ENCODE measurements at regions of chr12 and their contacts with region 1.

Region 1: DNA sequence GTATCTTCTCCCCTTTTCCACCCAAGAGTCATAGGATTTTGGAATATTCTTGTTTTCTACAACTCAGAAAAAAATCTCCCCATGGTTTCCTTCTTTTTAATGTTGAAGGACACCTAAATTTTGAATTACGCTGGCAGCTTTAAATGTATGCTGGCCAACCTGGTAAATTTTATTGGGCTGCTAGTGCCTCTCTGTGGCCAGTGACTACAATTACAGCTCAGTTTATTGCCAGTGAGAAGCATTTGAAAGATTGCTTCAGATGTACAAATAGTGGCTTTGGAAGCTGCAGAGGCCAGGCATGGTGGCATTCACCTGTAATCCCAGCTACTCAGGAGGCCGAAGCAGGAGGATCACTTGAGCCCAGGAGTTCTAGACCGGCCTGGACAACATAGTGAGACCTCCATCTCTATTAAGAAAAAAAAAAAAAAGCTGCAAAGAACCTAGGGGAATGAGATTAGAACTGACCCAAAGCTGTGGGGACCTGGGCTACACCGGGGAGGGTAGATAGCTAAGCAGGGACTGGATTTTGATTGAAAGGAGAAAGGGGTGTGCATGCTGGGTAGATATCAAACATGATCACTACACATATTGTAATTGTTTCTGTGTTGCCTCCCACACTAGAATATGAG is 7.6 kb upstream of the RAB21 start:
- DNase-seq: peak; percentile 49
- ATAC-seq: peak; percentile 90
- H3K4me3 ChIP-seq: no peak overlapping the region
- H3K27ac ChIP-seq: no peak overlapping the region
- H3K4me1 ChIP-seq: no peaks in the 10 kb centered on the region
- H3K27me3 ChIP-seq: peaks cover 7% of the 10 kb centered on the region; the same call in 1 of the 2 replicates
- CTCF ChIP-seq: peak; percentile 59 to 81 (median 76)
- POLR2A ChIP-seq: no peak
- RAD21 ChIP-seq: peak; percentile 93

Region 2: GRCh38 chr12:70733385-70733784 is 1013.7 kb before region 1 on chr12:
- CTCF ChIA-PET with region 1: interaction called, 7 read pairs
- POLR2A ChIA-PET with region 1: no interaction called
- RAD21 ChIA-PET with region 1: no interaction called
- intact Hi-C with region 1: loop called (anchors 5 kb)
- DNase-seq: peak; percentile 76
- ATAC-seq: peak; percentile 86
- H3K4me3 ChIP-seq: no peak overlapping the region
- H3K27ac ChIP-seq: no peak overlapping the region
- H3K4me1 ChIP-seq: no peaks in the 10 kb centered on the region
- H3K27me3 ChIP-seq: no peaks in the 10 kb centered on the region
- CTCF ChIP-seq: peak; percentile 66 to 89 (median 70)
- POLR2A ChIP-seq: no peak
- RAD21 ChIP-seq: peak; percentile 92

Region 3: DNA sequence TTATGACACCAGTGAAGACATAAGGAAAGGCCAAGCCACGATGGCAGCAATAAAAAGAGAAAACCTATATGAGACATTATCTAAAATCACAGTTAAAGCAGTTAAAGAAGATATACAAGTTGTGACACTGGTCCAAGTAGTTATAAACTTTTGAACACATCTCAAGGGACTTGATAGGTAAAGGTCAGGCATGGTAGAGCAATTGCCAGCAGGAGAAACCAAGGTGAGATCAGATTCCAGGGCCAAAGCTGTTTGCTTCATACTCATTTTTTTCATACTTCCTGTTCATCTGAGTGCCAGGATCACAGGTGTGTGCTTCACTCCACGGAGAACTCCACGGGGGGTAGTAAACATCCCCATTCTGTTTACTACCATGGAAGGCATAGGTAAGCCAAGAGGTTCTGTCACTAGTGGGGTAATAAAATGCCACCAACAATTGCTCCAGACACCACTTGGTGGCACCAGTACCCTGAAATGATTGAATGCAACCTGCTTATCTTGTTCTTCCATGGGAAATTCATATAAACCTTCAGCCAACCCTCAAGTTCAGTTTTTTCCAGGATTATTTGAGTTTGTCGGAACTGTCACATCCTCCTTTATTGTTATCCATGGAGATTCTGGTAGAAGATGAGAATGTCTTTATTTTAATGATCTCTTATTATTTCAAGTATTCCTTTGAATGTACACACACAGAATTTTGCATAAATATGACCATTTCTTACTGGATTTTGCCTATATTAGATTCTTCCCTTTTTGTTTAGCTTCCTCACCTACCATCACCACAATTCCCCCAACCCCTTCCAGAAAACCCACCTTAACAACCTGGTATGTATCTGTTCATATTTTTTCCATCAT is 530.1 kb before region 1 on chr12:
- CTCF ChIA-PET with region 1: interaction called, 8 read pairs
- POLR2A ChIA-PET with region 1: no interaction called
- RAD21 ChIA-PET with region 1: no interaction called
- intact Hi-C with region 1: loop called (anchors 1 kb)
- DNase-seq: peak; percentile 55
- ATAC-seq: peak; percentile 84
- H3K4me3 ChIP-seq: no peak overlapping the region
- H3K27ac ChIP-seq: no peak overlapping the region
- H3K4me1 ChIP-seq: no peaks in the 10 kb centered on the region
- H3K27me3 ChIP-seq: no peaks in the 10 kb centered on the region
- CTCF ChIP-seq: peak; percentile 59 to 70 (median 70); a peak in 5 of 6 replicates
- POLR2A ChIP-seq: no peak
- RAD21 ChIP-seq: peak; percentile 81

Region 4: DNA sequence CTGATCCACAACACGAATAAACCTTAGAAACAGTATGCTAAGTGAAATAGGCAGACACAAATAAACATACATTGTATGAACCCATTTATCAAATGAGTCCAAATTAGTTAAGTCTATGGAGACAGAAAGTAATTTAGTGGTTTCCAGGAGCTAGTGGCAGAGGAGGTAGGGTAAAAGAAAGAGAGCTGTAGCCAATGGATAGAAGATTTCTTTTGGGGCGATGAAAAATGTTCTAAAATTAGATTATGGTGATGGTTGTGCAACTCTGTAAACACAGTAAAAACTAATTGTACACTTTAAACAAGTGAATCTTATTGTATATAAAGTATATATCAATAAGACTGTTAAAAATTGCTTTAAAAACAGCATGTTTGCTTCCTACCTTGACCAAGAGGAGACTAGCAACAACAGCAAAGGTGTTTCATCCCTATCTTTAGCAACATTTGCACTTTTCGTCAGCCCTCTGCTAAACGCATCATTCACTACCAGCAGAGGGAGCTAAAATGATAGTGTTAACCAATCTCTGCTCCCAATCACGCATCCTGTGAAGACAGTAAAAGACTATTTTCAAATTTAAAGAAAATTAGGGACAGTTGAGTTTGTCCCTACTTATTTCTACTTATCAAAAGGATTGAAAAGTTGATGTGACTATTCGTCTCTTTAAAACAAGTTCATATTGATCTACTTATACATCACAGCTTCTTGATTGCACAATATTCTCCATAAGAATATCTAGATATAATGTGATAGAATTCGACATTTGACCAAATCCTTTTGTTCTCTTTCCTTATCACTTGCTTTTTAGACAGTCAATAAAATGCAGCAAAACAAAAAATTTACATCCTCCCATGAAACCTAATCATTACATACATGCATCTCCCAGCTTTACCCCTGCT is 331.5 kb before region 1 on chr12:
- CTCF ChIA-PET with region 1: interaction called, 33 read pairs
- POLR2A ChIA-PET with region 1: no interaction called
- RAD21 ChIA-PET with region 1: interaction called, 3 read pairs
- intact Hi-C with region 1: loop called (anchors 1 kb)
- DNase-seq: peak; percentile 42
- ATAC-seq: peak; percentile 90
- H3K4me3 ChIP-seq: no peak overlapping the region
- H3K27ac ChIP-seq: no peak overlapping the region
- H3K4me1 ChIP-seq: no peaks in the 10 kb centered on the region
- H3K27me3 ChIP-seq: no peaks in the 10 kb centered on the region
- CTCF ChIP-seq: peak; percentile 79 to 86 (median 81)
- POLR2A ChIP-seq: no peak
- RAD21 ChIP-seq: peak; percentile 87

Region 5: DNA sequence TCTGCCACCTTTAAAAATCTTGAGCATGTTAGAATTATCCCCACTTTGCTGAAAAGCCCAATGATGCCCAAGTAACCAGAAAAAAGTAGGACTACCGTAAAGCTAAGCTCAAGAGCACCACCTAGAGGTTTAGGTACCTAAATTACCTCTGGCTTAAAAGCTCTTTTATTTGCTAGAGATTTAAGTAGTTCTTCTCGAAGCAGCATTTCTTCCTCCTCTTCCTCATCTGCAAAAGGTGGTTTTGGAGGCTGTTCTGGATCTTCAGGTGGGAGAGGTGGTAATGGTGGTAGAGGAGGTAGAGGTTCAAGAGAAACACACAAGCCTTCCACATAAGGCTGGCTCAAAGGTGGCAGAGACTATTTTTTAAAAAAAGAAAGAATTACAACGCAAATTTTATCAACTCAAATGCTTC is 110.4 kb before region 1 on chr12:
- CTCF ChIA-PET with region 1: interaction called, 39 read pairs
- POLR2A ChIA-PET with region 1: interaction called, 3 read pairs
- RAD21 ChIA-PET with region 1: interaction called in 1 of 2 experiments, 6 read pairs
- intact Hi-C with region 1: loop called (anchors 2 kb)
- DNase-seq: peak; percentile 57
- ATAC-seq: peak; percentile 69
- H3K4me3 ChIP-seq: no peak overlapping the region
- H3K27ac ChIP-seq: no peak overlapping the region
- H3K4me1 ChIP-seq: peaks cover 0 to 4% of the 10 kb centered on the region in 2 experiments; a peak in 1 of 4 replicates
- H3K27me3 ChIP-seq: no peaks in the 10 kb centered on the region
- CTCF ChIP-seq: peak; percentile 42 to 79 (median 78); a peak in 5 of 6 replicates
- POLR2A ChIP-seq: no peak
- RAD21 ChIP-seq: peak; percentile 62

Region 6: GRCh38 chr12:71685914-71686665 is 61.0 kb before region 1 on chr12 and contains the start of gene TMEM19:
- CTCF ChIA-PET with region 1: interaction called, 19 read pairs
- POLR2A ChIA-PET with region 1: interaction called, 5 read pairs
- RAD21 ChIA-PET with region 1: interaction called in 1 of 2 experiments, 3 read pairs
- intact Hi-C with region 1: no loop called
- DNase-seq: peak; percentile 81
- ATAC-seq: peak; percentile 97
- H3K4me3 ChIP-seq: peak within 1 kb of the TSS; percentile 61 to 69
- H3K27ac ChIP-seq: peak within 1 kb of the TSS; percentile 84
- H3K4me1 ChIP-seq: peaks cover 0 to 19% of the 10 kb centered on the region in 2 experiments; a peak in 2 of 4 replicates
- H3K27me3 ChIP-seq: no peaks in the 10 kb centered on the region
- CTCF ChIP-seq: peak in 2 of 3 experiments; percentile 35 to 41; a peak in 4 of 6 replicates
- POLR2A ChIP-seq: peak; percentile 78
- RAD21 ChIP-seq: peak; percentile 67
- total RNA-seq, gene TMEM19: 18.9 TPM

Region 7: GRCh38 chr12:72388322-72388721 is 641.2 kb after region 1 on chr12:
- CTCF ChIA-PET with region 1: no interaction called
- POLR2A ChIA-PET with region 1: no interaction called
- RAD21 ChIA-PET with region 1: no interaction called
- intact Hi-C with region 1: no loop called
- DNase-seq: no peak
- ATAC-seq: no peak
- H3K4me3 ChIP-seq: no peak overlapping the region
- H3K27ac ChIP-seq: no peak overlapping the region
- H3K4me1 ChIP-seq: no peaks in the 10 kb centered on the region
- H3K27me3 ChIP-seq: no peaks in the 10 kb centered on the region
- CTCF ChIP-seq: no peak
- POLR2A ChIP-seq: no peak
- RAD21 ChIP-seq: no peak